H1 (cell line): ENCODE measurements at regions of chr13 and their contacts with region 1.

Region 1: DNA sequence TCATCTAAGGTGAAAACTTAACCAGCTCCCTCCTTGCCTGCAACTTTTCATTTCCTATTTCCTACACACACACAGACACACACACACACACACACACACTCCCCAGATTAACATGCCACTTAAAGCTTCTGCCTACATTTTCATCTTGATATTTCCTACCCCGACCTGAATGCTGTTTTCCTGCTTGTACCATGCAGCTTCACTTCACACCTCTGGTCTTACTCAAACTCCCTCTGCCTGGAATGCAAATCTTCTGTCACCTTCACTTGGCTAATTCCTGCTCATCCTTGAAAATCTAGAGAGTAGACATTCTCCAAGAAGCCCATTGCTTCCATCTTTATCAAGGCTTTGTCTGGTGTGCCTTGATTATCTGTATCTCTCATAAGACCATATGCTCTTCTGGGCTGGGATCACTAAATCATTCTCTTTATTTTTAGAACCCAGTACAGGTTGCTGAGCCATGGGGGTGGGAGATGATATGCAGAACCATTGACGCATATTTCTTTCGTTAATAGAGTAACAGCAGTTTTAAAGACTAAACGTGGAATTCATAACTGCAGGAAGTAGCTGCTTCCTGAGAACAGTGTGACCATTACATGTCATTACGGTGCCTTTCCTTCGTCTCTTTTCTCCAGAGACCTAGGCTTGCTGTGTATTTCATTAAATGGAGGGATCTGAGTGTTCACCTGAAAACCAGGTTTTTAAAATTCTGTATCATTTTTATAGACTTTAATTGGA is 37.7 kb downstream of the CNMD start:
- DNase-seq: no peak
- H3K4me3 ChIP-seq: no peak overlapping the region
- H3K27ac ChIP-seq: no peak overlapping the region
- H3K4me1 ChIP-seq: peaks cover 0 to 3% (median 1%) of the 10 kb centered on the region in 4 experiments; a peak in 3 of 7 replicates
- H3K27me3 ChIP-seq: no peaks in the 10 kb centered on the region
- CTCF ChIP-seq: no peak
- EP300 ChIP-seq: no peak
- POLR2A ChIP-seq: no peak
- RAD21 ChIP-seq: no peak

Region 2: GRCh38 chr13:52665325-52665724 is 36.6 kb before region 1 on chr13:
- CTCF ChIA-PET with region 1: interaction called, 16 read pairs
- POLR2A ChIA-PET with region 1: interaction called, 3 read pairs
- DNase-seq: no peak
- H3K4me3 ChIP-seq: no peak overlapping the region
- H3K27ac ChIP-seq: no peak overlapping the region
- H3K4me1 ChIP-seq: no peaks in the 10 kb centered on the region
- H3K27me3 ChIP-seq: no peaks in the 10 kb centered on the region
- CTCF ChIP-seq: peak in 2 of 3 experiments; percentile 23 to 37; a peak in 2 of 4 replicates
- EP300 ChIP-seq: no peak
- POLR2A ChIP-seq: no peak
- RAD21 ChIP-seq: peak in 1 of 2 experiments; percentile 54; a peak in 3 of 4 replicates

Region 3: GRCh38 chr13:52686381-52686780 is 15.5 kb before region 1 on chr13:
- CTCF ChIA-PET with region 1: interaction called, 18 read pairs
- POLR2A ChIA-PET with region 1: interaction called, 9 read pairs
- DNase-seq: no peak
- H3K4me3 ChIP-seq: no peak overlapping the region
- H3K27ac ChIP-seq: no peak overlapping the region
- H3K4me1 ChIP-seq: no peaks in the 10 kb centered on the region
- H3K27me3 ChIP-seq: no peaks in the 10 kb centered on the region
- CTCF ChIP-seq: no peak
- EP300 ChIP-seq: no peak
- POLR2A ChIP-seq: no peak
- RAD21 ChIP-seq: no peak

Region 4: GRCh38 chr13:52779103-52779502 is 77.2 kb after region 1 on chr13:
- CTCF ChIA-PET with region 1: no interaction called
- POLR2A ChIA-PET with region 1: no interaction called
- DNase-seq: no peak
- H3K4me3 ChIP-seq: no peak overlapping the region
- H3K27ac ChIP-seq: no peak overlapping the region
- H3K4me1 ChIP-seq: 0 out of 7 replicates have a peak, but pooled peaks cover 0 to 2% (median 0%) of the 10 kb centered on the region in 4 experiments
- H3K27me3 ChIP-seq: no peaks in the 10 kb centered on the region
- CTCF ChIP-seq: no peak
- EP300 ChIP-seq: no peak
- POLR2A ChIP-seq: no peak
- RAD21 ChIP-seq: no peak